Activated T-helper 2 cell treated with anti-CD3 and anti-CD28 coated beads, Interferon-gamma antibody, Interleukin-2, Interleukin-4, amounts not matched to agents 10 μg/mL and 5 μg/mL and 100 μg/mL, durations not matched to agents 14 hours and 24 hours and 36 hours (primary cell): ENCODE measurements at regions of chr9 and their contacts with region 1.

Region 1: DNA sequence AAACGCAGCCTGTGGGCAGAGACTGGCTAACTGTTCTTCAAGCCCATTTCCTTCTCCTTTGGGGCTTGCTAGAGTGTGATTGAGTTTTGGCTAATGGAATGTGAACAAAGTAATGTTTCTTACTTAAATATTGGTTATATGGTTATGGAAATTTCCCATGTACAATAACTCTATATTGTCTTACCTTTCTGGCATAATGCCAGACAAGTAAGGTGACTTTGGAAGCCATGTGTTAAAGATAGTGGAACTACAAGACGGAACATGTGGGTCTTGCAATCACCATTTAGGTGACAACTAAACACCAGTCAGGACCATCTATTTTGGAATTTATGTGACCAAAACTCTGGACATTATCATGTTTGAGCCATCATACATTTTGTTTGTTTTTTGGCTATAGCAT is 260.2 kb downstream of the CCDC171 start:
- DNase-seq: no peak
- H3K4me3 Mint-ChIP-seq: no peak overlapping the region
- H3K27ac Mint-ChIP-seq: no peak overlapping the region
- H3K4me1 Mint-ChIP-seq: no peaks in the 10 kb centered on the region
- H3K27me3 Mint-ChIP-seq: no peaks in the 10 kb centered on the region

Region 2: GRCh38 chr9:15475923-15476536 is 337.0 kb before region 1 on chr9:
- intact Hi-C with region 1: no loop called
- DNase-seq: no peak
- H3K4me3 Mint-ChIP-seq: no peak overlapping the region
- H3K27ac Mint-ChIP-seq: no peak overlapping the region
- H3K4me1 Mint-ChIP-seq: peaks cover 11% of the 10 kb centered on the region
- H3K27me3 Mint-ChIP-seq: no peaks in the 10 kb centered on the region

Region 3: DNA sequence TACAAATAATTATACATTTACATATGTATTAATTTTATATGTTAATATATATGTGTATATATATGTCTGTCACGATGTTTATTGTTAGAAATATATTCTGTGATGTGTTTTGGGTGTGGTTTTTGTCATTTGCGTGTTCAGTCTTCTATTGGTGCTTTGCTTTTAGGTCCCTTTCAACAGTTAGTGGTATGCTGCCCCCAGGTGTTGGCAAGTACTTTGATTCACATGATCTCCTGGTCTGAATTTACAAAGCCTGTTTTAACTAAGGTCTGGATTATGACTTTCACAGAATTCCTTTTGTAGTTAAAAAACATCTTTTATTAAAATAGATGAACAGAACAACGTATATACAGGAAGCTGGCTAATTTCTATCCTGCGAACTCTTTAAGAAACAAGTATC is 11.2 kb after region 1 on chr9:
- intact Hi-C with region 1: loop called (anchors 1 kb)
- DNase-seq: no peak
- H3K4me3 Mint-ChIP-seq: no peak overlapping the region
- H3K27ac Mint-ChIP-seq: no peak overlapping the region
- H3K4me1 Mint-ChIP-seq: no peaks in the 10 kb centered on the region
- H3K27me3 Mint-ChIP-seq: no peaks in the 10 kb centered on the region